ENCODE measurements at regions of chr9 and their contacts with region 1.

Region 1: DNA sequence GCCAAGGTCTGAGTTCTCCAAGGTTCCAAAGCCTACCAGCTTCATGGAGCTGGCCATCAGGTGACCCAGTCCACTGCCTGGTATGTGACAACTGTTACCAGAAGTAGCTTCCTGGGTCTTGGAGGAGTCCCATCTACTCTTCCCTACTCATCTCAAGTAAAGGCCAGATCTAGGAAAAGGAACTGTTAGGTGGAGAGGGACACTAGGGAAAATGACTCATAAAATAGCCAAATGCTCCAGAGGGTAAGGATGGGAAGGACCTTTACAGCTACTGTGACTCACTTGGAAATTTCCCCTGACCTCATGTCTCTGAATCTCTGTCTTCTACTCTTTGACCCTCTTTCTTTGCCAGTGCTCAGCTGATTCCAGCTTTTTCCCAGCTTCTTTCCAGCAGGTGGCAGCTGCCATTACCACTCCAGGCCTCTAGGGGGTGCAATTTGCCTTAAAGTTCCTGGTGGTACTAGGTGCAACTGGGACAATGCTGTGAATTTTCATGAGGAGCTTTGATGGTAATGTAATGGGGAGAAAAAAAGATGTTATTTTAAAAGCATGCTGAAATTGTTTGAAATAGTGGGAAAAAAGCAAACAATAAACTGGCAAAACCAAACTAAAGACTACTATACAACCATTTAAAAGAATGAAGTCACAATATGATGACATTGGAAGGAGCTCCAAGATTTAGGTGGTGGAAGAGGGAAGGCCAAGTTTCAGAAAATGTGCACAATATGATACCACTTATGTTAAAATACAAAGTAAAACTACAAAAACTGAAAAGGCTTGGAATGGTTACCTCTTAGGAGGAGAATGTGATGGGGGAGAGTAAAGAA is 27.1 kb upstream of the MYORG start:
- DNase-seq: peak in 8 of 9 donors; percentile 22 to 56 (median 40)
- ATAC-seq: peak; percentile 82
- H3K4me3 ChIP-seq: no peak overlapping the region
- H3K4me3 Mint-ChIP-seq: no peak overlapping the region
- H3K27ac ChIP-seq: no peak overlapping the region
- H3K27ac Mint-ChIP-seq: no peak overlapping the region
- H3K4me1 ChIP-seq: no peaks in the 10 kb centered on the region
- H3K4me1 Mint-ChIP-seq: peaks cover 0 to 3% (median 0%) of the 10 kb centered on the region in 7 donors
- H3K27me3 ChIP-seq: no peaks in the 10 kb centered on the region
- H3K27me3 Mint-ChIP-seq: no peaks in the 10 kb centered on the region

Region 2: DNA sequence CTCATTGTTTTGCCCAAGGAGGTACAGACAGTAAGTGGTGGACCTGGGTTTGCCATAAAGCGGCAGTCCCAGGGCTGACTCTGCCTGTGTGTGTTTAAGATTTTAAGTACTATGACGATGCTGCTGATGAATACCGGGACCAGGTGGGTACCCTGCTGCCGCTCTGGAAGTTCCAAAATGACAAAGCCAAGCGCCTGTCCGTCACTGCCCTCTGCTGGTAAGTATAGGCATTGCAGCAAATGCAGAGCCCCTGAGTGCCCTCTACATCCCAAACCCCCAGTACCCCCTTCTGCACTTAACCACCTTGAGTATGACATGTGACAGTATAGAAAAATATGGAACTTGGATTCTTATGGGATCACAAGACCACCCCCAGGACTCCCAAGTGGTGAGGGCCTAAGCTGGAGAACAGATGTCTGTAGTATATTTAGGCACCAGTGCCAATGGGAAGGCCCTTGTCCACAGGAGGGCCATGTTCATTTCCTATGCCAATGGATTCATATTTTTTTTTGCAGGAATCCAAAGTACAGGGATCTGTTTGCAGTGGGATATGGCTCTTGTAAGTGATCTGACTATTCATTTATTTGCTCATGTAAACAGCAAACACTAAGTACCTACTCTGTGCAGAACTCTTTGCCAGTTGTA is 97.0 kb after region 1 on chr9:
- CTCF ChIA-PET with region 1: interaction called, 18 read pairs
- POLR2A ChIA-PET with region 1: no interaction called
- intact Hi-C with region 1: loop called (anchors 1 kb)
- DNase-seq: peak; percentile 38 to 80 (median 61)
- ATAC-seq: peak; percentile 90
- H3K4me3 ChIP-seq: no peak overlapping the region
- H3K4me3 Mint-ChIP-seq: no peak overlapping the region
- H3K27ac ChIP-seq: no peak overlapping the region
- H3K27ac Mint-ChIP-seq: no peak overlapping the region
- H3K4me1 ChIP-seq: no peaks in the 10 kb centered on the region
- H3K4me1 Mint-ChIP-seq: peaks cover 0 to 2% (median 0%) of the 10 kb centered on the region in 7 donors
- H3K27me3 ChIP-seq: no peaks in the 10 kb centered on the region
- H3K27me3 Mint-ChIP-seq: peaks cover 0 to 19% (median 0%) of the 10 kb centered on the region in 5 donors

Region 3: GRCh38 chr9:34732893-34733292 is 329.1 kb after region 1 on chr9:
- CTCF ChIA-PET with region 1: no interaction called
- POLR2A ChIA-PET with region 1: no interaction called
- intact Hi-C with region 1: no loop called
- DNase-seq: no peak
- ATAC-seq: no peak
- H3K4me3 ChIP-seq: no peak overlapping the region
- H3K4me3 Mint-ChIP-seq: no peak overlapping the region
- H3K27ac ChIP-seq: no peak overlapping the region
- H3K27ac Mint-ChIP-seq: no peak overlapping the region
- H3K4me1 ChIP-seq: no peaks in the 10 kb centered on the region
- H3K4me1 Mint-ChIP-seq: no peaks in the 10 kb centered on the region
- H3K27me3 ChIP-seq: no peaks in the 10 kb centered on the region
- H3K27me3 Mint-ChIP-seq: peaks cover 0 to 18% (median 4%) of the 10 kb centered on the region in 5 donors